Breast epithelium (tissue), 4 donors: ENCODE measurements at regions of chr1 and their contacts with region 1.

Region 1: GRCh38 chr1:20530906-20531305 is 21.5 kb upstream of the FAM43B start:
- DNase-seq: no peak
- H3K4me3 ChIP-seq: no peak overlapping the region
- H3K27ac ChIP-seq: no peak overlapping the region
- H3K4me1 ChIP-seq: no peaks in the 10 kb centered on the region
- H3K27me3 ChIP-seq: peaks cover 0 to 7% of the 10 kb centered on the region in 2 donors
- CTCF ChIP-seq: no peak
- POLR2A ChIP-seq: no peak

Region 2: DNA sequence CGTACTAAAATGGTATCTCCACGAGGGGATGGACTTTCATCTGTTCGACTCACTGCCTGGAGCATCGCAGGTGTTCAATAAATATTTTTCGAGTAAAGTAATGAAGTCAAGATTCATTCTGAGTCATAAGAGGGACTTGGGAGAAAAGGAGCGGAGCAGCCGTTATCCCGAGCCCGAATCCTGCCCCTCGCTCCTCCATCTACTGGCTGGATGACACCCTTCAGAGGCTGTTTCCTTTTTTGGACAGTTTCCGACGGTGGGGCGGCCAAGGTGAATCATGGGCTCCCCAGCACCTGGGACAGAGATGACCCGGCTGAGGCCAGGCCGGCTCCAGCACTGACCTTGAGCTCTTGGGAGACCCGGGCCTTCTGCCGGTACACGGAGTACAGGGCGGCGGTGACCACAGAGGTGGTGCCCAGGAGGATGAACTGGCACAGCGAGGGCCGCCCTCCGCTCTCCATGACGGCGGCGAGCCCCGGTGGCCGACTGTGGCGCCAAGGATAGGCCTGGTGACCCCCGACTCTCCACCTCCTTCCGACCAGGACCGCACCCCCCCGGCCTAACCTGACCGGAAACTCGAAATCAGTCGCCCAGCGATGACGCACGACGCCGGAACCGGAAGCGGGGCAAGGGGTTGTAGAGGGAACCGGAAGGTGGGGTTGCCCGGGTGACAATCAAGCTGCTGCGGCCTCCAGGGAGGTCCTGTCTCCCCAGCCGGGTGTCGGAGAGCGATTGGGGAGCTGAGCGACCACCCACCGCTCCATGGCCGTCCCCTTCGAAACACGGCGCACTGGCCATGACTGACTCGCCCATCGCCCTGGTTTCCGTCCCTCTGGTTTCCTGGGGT is 23.1 kb before region 1 on chr1 and contains the start of gene MUL1:
- intact Hi-C with region 1: no loop called
- DNase-seq: peak; percentile 90 to 93
- H3K4me3 ChIP-seq: peak within 1 kb of the TSS; percentile 63 to 94 (median 78)
- H3K27ac ChIP-seq: peak within 1 kb of the TSS; percentile 86 to 90
- H3K4me1 ChIP-seq: no peaks in the 10 kb centered on the region
- H3K27me3 ChIP-seq: no peaks in the 10 kb centered on the region
- CTCF ChIP-seq: no peak
- POLR2A ChIP-seq: peak; percentile 73
- total RNA-seq, gene MUL1: 25.4 to 35.1 (median 29.6) TPM

Region 3: DNA sequence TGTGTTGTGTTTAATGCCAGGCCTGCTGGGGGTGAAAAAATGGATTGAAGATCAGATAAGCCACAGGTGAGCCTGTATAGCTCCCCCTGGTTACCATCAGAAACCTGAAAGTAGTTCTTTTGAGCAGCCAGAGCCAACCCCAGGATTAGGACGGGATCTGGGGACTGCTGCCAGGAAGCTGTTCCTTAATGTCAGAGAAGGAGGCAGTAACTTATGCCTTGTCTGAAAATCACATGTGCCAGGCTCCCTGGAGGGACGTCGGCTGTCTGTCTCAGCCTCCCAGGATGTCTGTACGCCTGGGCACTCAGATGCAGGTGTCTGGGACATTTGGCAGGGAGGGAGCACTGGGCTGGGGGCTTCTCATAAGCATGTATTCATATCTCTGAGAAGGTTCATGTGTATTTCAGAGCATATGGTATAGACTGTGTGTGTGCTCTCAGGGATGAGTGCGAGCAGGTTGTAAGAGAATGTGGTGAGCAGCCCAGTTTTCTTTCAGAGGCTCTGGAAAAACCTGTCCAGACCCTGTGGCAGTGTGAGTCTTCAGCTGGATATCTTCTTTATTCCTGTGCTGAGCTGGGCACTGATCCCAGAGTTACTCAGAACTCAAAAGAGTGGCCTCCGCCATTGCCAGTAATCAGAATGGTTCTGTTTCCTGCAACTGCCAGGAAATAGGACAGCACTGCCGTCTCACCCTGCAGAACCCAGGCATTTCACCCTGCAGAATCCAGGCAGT is 24.3 kb after region 1 on chr1:
- intact Hi-C with region 1: loop called (anchors 1 kb)
- DNase-seq: peak in 1 of 2 donors; percentile 18
- H3K4me3 ChIP-seq: no peak overlapping the region
- H3K27ac ChIP-seq: peak overlapping the region in 1 of 2 donors; percentile 25
- H3K4me1 ChIP-seq: peaks cover 0 to 6% of the 10 kb centered on the region in 2 donors
- H3K27me3 ChIP-seq: peaks cover 0 to 29% of the 10 kb centered on the region in 2 donors
- CTCF ChIP-seq: no peak
- POLR2A ChIP-seq: no peak